ENCODE measurements at regions of chr7 and their contacts with region 1.

Region 1: GRCh38 chr7:95324431-95324830 is at the start of gene PON1:
- DNase-seq: no peak
- ATAC-seq: no peak
- H3K4me3 ChIP-seq: 0 out of 3 replicates have a peak within 1 kb of the TSS, but pooled peaks have one; percentile 18
- H3K27ac ChIP-seq: peak within 1 kb of the TSS; percentile 86 to 87
- H3K4me1 ChIP-seq: peaks cover 26% of the 10 kb centered on the region
- CTCF ChIP-seq: no peak
- EP300 ChIP-seq: no peak
- POLR2A ChIP-seq: no peak
- RAD21 ChIP-seq: no peak
- polyA plus RNA-seq, gene PON1: 6.6 and 8.2 TPM in 2 replicates

Region 2: GRCh38 chr7:95276114-95276513 is 48.3 kb before region 1 on chr7:
- CTCF ChIA-PET with region 1: no interaction called
- POLR2A ChIA-PET with region 1: no interaction called
- DNase-seq: no peak
- ATAC-seq: no peak; a peak in 1 of 6 replicates
- H3K4me3 ChIP-seq: no peak overlapping the region
- H3K27ac ChIP-seq: peak overlapping the region in 1 of 2 experiments; percentile 36; a peak in 1 of 6 replicates
- H3K4me1 ChIP-seq: peaks cover 28% of the 10 kb centered on the region
- CTCF ChIP-seq: no peak
- EP300 ChIP-seq: no peak
- POLR2A ChIP-seq: no peak
- RAD21 ChIP-seq: no peak

Region 3: DNA sequence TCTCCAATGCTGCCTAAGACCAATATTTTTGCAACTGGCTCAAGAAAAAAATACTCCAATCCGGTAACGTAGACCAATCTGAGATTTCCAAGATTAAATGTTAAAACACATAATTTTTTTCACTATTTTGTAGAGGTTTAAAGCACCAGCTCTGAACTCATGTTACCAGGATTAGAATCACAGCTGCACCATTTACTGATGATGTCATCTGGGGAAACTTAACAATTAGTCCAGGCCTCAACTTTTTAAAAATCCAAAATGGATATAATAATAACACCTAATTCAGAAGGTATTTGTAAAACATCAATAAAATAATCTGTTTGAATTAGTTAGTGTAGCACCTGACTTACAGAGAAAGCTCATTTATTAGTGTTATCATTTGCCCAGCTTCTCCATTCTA is 14.5 kb before region 1 on chr7:
- CTCF ChIA-PET with region 1: interaction called, 15 read pairs
- POLR2A ChIA-PET with region 1: no interaction called
- DNase-seq: no peak
- ATAC-seq: no peak
- H3K4me3 ChIP-seq: no peak overlapping the region
- H3K27ac ChIP-seq: peak overlapping the region in 1 of 2 experiments; percentile 64; a peak in 2 of 6 replicates
- H3K4me1 ChIP-seq: peaks cover 13% of the 10 kb centered on the region
- CTCF ChIP-seq: no peak
- EP300 ChIP-seq: no peak
- POLR2A ChIP-seq: no peak
- RAD21 ChIP-seq: no peak

Region 4: DNA sequence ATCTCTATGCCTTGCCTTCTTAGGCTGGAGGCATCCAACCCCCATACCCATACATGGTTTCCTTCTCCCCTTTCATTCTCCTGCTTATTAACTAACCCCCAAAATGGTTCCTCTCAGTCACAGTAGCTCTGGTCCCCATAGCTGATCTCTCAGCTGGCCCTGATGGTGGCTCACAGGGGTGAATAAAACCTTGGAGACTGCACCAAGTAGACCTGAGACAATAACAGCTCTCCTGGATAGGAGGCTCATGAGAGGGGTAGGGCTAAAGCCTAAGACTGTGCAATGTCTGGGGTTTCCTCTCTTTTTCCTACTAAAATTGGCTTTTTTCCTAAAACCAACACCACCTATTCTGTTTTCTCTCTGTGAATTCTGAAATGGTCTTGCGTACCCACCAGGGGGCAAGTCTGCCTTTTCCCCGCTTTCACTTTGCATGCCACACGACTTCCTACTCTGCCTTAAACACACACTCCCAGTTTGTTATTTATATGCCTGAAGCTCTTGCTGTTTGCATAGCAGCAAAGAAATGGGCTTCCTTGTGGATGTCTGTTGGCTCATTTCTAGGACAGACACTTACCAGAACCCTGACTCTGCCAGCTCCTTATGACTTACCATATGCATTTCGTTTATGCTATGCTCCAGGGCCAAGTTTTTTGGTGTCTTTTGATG is 18.3 kb after region 1 on chr7:
- CTCF ChIA-PET with region 1: no interaction called
- POLR2A ChIA-PET with region 1: no interaction called
- DNase-seq: peak in 1 of 2 experiments; percentile 59
- ATAC-seq: peak; percentile 28 to 69; a peak in 3 of 6 replicates
- H3K4me3 ChIP-seq: no peak overlapping the region
- H3K27ac ChIP-seq: peak overlapping the region in 1 of 2 experiments; percentile 1; a peak in 1 of 6 replicates
- H3K4me1 ChIP-seq: peaks cover 8% of the 10 kb centered on the region; the same call in 1 of the 3 replicates
- CTCF ChIP-seq: no peak
- EP300 ChIP-seq: no peak
- POLR2A ChIP-seq: no peak
- RAD21 ChIP-seq: no peak

Measured in A549 (cell line).